ENCODE measurements at regions of chr1 and their contacts with region 1.

Region 1: GRCh38 chr1:244864253-244865027 is at the start of gene HNRNPU:
- DNase-seq: peak; percentile 81
- ATAC-seq: peak; percentile 80
- H3K4me3 ChIP-seq: peak within 1 kb of the TSS; percentile 100
- H3K27ac ChIP-seq: peak within 1 kb of the TSS; percentile 99
- H3K4me1 ChIP-seq: peaks cover 3% of the 10 kb centered on the region; the same call in 1 of the 2 replicates
- H3K27me3 ChIP-seq: no peaks in the 10 kb centered on the region
- CTCF ChIP-seq: peak; percentile 9 to 30 (median 16); a peak in 3 of 6 replicates
- EP300 ChIP-seq: no peak
- POLR2A ChIP-seq: peak; percentile 99
- RAD21 ChIP-seq: no peak
- polyA plus RNA-seq, gene HNRNPU: 163 to 201 TPM

Region 2: DNA sequence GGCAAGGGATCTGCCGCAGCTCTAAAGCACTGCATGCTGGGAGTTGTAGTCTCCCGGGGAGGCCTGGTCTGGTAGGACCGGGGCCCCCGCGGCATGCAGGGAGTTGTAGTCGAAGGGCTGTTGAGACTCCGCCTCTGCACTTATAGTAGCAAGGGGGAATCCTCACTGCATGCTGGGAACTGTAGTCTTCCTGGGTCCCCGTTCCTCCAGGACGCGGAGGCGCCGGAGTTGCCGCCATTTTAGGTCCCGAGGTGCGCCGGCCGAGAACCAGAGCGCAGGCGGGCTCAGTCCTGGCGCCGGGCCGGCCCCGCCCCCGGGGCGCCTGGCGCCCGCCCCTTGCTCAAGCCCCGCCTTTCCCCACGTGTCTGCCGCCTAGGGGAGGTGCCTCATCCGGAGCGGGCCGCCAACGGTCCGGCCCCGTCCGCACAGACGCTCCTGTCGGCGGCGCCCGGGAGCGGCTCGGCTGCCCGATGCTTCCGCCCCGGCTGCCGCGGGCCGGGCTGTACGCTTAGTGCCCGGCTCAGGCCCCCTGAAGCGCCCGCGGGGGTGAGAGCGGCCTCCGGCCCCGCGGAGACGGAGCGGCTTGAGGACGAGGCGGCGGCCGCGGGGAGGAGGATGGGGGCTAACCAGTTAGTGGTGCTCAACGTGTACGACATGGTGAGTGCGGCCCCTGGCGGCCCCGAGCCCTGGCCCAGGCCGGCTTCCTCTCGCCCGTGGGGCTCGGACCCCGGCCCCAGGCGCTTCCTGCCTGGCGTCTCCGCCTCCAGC is 211.6 kb before region 1 on chr1 and contains the start of gene DESI2:
- CTCF ChIA-PET with region 1: no interaction called
- POLR2A ChIA-PET with region 1: interaction called, 4 read pairs
- RAD21 ChIA-PET with region 1: no interaction called
- SMC1A ChIA-PET with region 1: interaction called, 3 read pairs
- in situ Hi-C with region 1: no loop called
- intact Hi-C with region 1: loop called (anchors 2 kb)
- DNase-seq: peak; percentile 96
- ATAC-seq: peak; percentile 95
- H3K4me3 ChIP-seq: peak within 1 kb of the TSS; percentile 91
- H3K27ac ChIP-seq: peak within 1 kb of the TSS; percentile 71
- H3K4me1 ChIP-seq: no peaks in the 10 kb centered on the region
- H3K27me3 ChIP-seq: no peaks in the 10 kb centered on the region; a peak in 1 of 4 replicates
- CTCF ChIP-seq: peak; percentile 40 to 51 (median 46); a peak in 5 of 6 replicates
- EP300 ChIP-seq: 0 out of 4 replicates have a peak, but pooled peaks of 1 of the 2 experiments have one; percentile 2
- POLR2A ChIP-seq: peak; percentile 96
- RAD21 ChIP-seq: no peak
- polyA plus RNA-seq, gene DESI2: 6.2 to 7.0 TPM

Region 3: GRCh38 chr1:244768186-244768585 is 96.3 kb before region 1 on chr1:
- CTCF ChIA-PET with region 1: no interaction called
- POLR2A ChIA-PET with region 1: no interaction called
- RAD21 ChIA-PET with region 1: no interaction called
- SMC1A ChIA-PET with region 1: no interaction called
- in situ Hi-C with region 1: no loop called
- intact Hi-C with region 1: no loop called
- DNase-seq: no peak
- ATAC-seq: no peak
- H3K4me3 ChIP-seq: no peak overlapping the region
- H3K27ac ChIP-seq: no peak overlapping the region
- H3K4me1 ChIP-seq: no peaks in the 10 kb centered on the region
- H3K27me3 ChIP-seq: peaks cover 0 to 1% of the 10 kb centered on the region in 2 experiments; a peak in 2 of 4 replicates
- CTCF ChIP-seq: no peak
- EP300 ChIP-seq: no peak
- POLR2A ChIP-seq: no peak
- RAD21 ChIP-seq: no peak

Region 4: DNA sequence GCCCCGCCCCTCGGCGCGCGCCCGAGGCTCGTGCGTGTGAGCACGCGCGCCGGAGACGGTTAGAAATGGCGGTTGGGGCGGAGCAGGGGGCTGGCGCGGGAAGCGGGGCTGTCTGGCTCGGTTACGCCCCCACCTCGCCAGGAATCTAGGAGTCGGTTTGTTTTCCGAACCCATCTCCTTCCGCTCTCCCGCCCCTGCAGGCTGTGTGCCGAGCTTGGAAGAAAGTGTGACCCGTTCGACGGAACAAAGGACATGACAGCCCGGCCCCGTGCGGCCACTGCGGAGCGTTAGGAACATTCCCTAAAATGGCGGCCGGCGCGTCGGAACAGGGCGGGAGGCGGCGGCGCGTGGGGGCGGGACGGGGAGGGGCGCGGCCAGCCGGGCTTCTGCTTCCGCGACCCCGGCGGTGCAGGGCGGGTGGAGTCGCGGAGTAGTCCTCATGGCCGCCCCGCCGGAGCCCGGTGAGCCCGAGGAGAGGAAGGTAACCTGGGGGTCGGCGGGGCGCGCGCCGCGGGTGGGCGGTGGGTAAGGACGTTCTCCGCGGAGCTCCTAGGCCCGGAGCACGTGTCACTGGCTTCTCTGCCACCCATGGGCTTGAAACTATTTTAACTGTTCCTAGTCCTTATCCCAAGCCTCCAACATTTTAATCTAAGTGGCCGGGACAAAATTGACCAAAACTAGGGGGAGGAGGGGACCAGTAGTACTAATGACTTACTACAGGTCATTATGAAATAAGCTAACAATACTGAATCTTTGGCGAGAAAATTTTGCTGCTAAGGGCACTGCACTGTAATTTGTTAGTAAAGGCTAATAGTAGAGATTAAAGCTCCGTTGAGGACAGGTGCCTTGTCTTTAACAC is 28.9 kb before region 1 on chr1 and contains the start of gene COX20:
- CTCF ChIA-PET with region 1: interaction called, 98 read pairs
- POLR2A ChIA-PET with region 1: interaction called, 350 read pairs
- RAD21 ChIA-PET with region 1: interaction called, 44 read pairs
- SMC1A ChIA-PET with region 1: interaction called, 360 read pairs
- in situ Hi-C with region 1: no loop called
- intact Hi-C with region 1: loop called (anchors 1 kb)
- DNase-seq: peak; percentile 60
- ATAC-seq: peak; percentile 74
- H3K4me3 ChIP-seq: peak within 1 kb of the TSS; percentile 72
- H3K27ac ChIP-seq: peak within 1 kb of the TSS; percentile 99
- H3K4me1 ChIP-seq: peaks cover 6% of the 10 kb centered on the region
- H3K27me3 ChIP-seq: no peaks in the 10 kb centered on the region
- CTCF ChIP-seq: no peak
- EP300 ChIP-seq: 0 out of 4 replicates have a peak, but pooled peaks of 1 of the 2 experiments have one; percentile 3
- POLR2A ChIP-seq: peak; percentile 91
- RAD21 ChIP-seq: no peak
- polyA plus RNA-seq, gene COX20: 91.9 to 95.3 TPM

Region 5: DNA sequence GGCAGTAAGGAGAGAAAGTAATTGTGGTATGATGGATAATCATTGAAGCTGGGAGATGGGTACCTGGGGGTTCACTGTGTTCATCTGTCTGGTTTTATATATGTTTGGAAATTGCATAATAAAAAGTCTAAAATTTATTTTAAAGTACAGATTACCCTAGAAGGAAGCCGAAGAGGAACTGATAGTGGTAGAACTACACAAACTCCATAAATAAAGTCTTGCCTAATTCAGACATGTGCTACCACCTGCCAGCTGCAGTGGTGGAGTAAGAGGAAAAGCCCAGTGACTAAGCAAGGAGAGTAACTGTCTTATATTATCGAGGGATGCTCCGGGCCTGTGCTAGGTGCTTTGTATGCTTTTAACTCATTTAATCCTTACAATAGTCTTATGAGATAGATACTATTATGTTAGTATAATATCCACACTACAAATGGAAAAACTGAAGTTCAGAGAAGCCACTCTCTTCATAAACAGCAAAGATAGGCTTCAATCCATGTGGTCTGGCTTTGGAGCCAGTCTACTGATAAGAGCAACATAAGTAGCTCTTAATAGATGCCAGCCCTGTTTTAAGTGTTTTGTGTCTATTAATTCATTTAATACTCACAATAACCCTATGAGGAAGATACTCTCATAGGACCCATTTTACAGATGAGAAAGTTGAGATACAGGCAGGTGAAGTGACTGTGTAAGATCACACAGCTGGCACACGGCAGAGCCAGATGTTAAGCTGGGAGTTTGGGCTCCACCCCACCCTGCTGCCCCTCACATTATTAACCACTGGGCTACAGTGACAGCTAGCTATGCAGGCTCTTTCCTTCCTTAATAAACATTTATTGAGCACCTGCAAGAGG is 56.7 kb after region 1 on chr1:
- CTCF ChIA-PET with region 1: no interaction called
- POLR2A ChIA-PET with region 1: no interaction called
- RAD21 ChIA-PET with region 1: interaction called, 3 read pairs
- SMC1A ChIA-PET with region 1: interaction called, 5 read pairs
- in situ Hi-C with region 1: no loop called
- intact Hi-C with region 1: loop called (anchors 2 kb)
- DNase-seq: no peak
- ATAC-seq: peak; percentile 73
- H3K4me3 ChIP-seq: no peak overlapping the region
- H3K27ac ChIP-seq: peak overlapping the region; percentile 51
- H3K4me1 ChIP-seq: peaks cover 14% of the 10 kb centered on the region
- H3K27me3 ChIP-seq: no peaks in the 10 kb centered on the region
- CTCF ChIP-seq: no peak
- EP300 ChIP-seq: no peak
- POLR2A ChIP-seq: no peak
- RAD21 ChIP-seq: no peak

Region 6: DNA sequence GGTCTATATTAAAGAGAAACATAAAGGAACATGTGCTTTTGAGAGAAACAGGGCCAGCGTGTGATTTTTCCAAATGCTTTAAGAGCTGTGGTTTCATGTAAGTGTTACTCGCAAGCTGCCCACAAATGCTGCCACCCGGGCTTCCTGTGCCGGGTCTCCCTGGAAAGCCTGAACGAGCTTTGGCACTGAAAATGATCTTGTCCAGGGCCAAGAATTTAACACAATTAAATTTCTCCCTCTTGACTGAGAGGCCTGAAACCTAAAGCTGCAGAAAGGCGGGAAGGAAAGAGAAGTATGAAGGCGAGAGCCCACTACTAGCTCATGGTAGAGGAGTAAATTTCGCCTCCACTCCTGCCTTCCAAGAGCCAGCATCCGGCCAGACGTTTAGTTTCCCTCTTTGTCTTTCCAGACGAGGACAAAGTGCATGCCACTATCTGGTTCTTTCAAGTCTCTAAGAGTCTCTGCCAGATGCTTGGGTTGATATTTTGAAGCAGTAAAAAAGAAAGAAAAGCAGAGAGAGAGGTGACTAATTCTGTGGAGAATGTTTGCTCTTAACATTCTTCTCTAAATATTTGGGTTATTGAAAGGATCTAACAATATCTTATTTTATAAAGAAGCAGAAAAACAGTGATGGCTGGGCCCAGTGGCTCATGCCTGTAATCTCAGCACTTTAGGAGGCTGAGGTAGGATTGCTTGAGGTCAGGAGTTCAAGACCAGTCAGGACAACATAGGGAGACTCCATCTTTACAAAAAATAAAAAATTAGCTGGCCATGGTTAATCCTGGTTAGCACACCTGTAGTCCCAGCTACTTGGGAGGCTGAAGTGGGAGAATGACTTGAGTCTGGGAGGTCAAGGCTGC is 99.9 kb after region 1 on chr1:
- CTCF ChIA-PET with region 1: interaction called, 3 read pairs
- POLR2A ChIA-PET with region 1: interaction called, 33 read pairs
- RAD21 ChIA-PET with region 1: interaction called, 12 read pairs
- SMC1A ChIA-PET with region 1: interaction called, 11 read pairs
- in situ Hi-C with region 1: loop called (anchors 5 kb)
- intact Hi-C with region 1: no loop called
- DNase-seq: no peak
- ATAC-seq: peak; percentile 45
- H3K4me3 ChIP-seq: no peak overlapping the region
- H3K27ac ChIP-seq: no peak overlapping the region
- H3K4me1 ChIP-seq: peaks cover 7% of the 10 kb centered on the region; the same call in 1 of the 2 replicates
- H3K27me3 ChIP-seq: no peaks in the 10 kb centered on the region
- CTCF ChIP-seq: no peak
- EP300 ChIP-seq: no peak
- POLR2A ChIP-seq: no peak
- RAD21 ChIP-seq: no peak

Region 7: DNA sequence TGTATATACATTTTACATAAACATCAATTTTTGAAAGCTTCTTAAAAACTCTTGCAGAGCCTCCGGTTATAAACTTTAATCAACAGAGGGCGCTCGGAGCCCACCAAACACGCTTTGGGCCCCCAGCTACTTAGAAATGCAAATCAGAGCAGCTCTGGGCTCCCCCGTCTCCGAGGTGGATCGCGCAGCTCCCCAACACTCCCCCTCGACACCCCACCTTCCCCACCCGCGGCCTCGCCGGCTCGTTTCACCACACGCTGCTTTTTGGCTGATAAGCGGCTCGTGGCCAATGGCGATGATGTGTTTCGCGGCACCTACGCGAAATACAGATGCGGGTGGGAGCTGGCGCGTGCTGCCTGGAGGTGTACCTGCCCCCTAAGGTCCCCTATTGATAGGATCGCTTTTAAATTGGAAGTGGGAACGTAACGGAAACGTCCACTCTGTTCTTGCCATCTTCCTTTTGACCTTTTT is 288.7 kb after region 1 on chr1:
- CTCF ChIA-PET with region 1: no interaction called
- POLR2A ChIA-PET with region 1: no interaction called
- RAD21 ChIA-PET with region 1: no interaction called
- SMC1A ChIA-PET with region 1: no interaction called
- in situ Hi-C with region 1: no loop called
- intact Hi-C with region 1: no loop called
- DNase-seq: no peak
- ATAC-seq: peak; percentile 41
- H3K4me3 ChIP-seq: peak overlapping the region; percentile 62
- H3K27ac ChIP-seq: no peak overlapping the region
- H3K4me1 ChIP-seq: peaks cover 18% of the 10 kb centered on the region
- H3K27me3 ChIP-seq: peaks cover 12 to 29% of the 10 kb centered on the region in 2 experiments
- CTCF ChIP-seq: peak; percentile 58 to 76 (median 67)
- EP300 ChIP-seq: no peak
- POLR2A ChIP-seq: no peak
- RAD21 ChIP-seq: peak; percentile 89